ENCODE measurements at regions of chr14 and their contacts with region 1.

Region 1: GRCh38 chr14:49862089-49862673 is 9.6 kb upstream of the NEMF start:
- DNase-seq: peak; percentile 56

Region 2: DNA sequence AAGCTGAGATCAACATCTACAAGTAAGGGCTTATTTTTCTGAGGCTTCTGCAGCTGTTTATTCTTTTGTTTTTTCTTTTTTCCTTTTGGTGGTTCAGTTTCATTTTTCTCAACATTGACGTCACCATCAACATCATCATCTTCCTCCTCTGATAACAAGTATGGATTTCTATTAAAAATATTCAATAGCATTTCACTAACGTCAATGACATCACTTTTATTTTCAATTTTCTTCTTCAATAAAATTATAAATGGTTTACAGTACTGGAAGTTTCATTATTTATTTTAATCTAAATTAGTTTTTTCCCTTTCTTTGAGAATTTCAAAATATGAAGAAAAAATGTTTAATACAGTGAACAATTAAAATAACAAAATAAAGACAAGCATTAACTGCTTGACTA is 33.5 kb before region 1 on chr14:
- CTCF ChIA-PET with region 1: no interaction called
- POLR2A ChIA-PET with region 1: no interaction called
- DNase-seq: no peak

Region 3: DNA sequence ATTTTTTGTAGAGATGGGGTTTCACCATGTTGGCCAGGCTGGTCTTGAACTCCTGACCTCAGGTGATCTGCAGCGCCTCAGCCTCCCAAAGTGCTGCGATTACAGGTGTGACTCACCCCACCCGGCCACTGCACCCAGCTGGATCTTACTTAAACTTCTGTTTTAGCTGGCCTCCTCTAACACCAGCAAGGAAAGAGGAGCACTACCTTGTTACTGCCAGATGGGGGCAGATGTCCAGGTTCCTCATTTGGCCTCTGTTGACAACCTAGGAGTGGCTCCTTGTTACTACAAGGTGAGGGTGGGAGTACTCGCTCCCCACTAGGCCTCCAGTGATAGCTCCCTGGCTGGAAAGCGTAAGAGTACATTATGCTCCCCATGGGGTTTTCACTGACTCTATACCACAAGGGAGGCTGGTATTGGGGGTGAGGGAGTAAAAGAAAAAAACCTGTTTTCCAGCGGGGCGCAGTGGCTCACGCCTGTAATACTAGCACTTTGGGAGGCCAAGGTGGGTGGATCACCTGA is 17.6 kb after region 1 on chr14:
- CTCF ChIA-PET with region 1: interaction called, 14 read pairs
- POLR2A ChIA-PET with region 1: interaction called, 11 read pairs
- DNase-seq: peak; percentile 74

Region 4: DNA sequence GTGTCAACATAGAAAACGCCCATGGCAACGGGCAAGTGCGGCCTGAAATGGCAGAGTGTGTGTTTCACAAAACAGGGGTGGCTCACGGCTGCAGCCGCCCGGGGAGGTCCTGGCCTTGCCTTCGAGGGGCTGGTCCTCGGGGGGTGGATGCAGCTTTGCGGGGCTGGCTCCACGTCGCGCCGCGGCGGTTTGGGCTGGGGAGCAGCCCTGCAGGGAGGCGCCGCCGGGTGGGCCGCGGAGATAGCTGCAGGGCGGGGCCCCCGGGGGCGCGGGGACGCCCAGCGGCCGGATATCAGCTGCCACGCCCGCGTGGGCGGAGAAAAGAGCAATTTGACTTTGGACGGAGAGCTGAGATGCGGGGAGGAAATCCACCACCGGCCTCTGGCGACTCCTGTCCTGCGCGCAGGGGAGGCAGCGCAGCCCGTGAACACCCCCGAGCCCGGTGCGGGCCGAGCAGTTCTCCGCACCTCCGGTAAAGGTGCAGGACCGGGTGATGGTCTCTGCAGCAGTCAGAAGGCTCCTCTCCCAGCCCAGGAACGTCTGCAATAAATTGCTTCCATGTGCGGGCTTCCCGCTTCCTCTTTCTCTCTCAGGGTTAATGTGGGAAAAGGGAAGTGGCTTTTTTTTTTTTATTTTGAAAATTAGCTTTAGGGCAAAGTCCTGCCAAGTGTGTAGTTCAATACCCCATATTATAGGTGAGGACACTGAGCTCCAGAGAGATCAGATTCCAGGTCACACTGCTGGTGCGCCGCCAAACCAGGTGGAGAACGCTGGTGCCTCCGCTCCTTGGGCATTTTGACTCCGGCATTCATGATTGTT is 141.2 kb after region 1 on chr14:
- CTCF ChIA-PET with region 1: interaction called, 11 read pairs
- POLR2A ChIA-PET with region 1: interaction called, 6 read pairs
- DNase-seq: peak; percentile 55

Region 5: GRCh38 chr14:50085570-50086320 is 223.6 kb after region 1 on chr14:
- CTCF ChIA-PET with region 1: interaction called, 10 read pairs
- POLR2A ChIA-PET with region 1: interaction called, 3 read pairs
- DNase-seq: no peak

Region 6: DNA sequence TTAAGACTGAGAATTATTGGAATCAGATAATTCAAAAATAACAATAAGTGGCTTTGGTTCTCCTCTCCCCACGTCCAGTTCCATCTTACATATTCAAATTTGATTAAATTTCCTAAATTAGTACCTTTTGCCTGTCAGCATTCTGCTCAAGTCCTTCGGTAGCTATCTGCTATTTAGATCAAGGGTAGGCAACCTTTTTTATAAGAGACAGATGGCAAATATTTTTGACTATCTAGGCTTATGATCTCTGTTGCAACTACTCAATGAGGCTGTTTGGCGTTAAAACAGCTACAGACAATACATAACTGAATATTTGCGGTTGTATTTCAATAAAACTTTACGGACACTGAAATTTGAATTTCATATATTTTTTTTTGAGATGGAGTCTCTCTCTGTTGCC is 428.1 kb after region 1 on chr14:
- CTCF ChIA-PET with region 1: no interaction called
- POLR2A ChIA-PET with region 1: no interaction called
- DNase-seq: no peak

Measured in HEK293T (cell line).